CD4-positive, alpha-beta T cell (primary cell): ENCODE measurements at regions of chr7 and their contacts with region 1.

Region 1: DNA sequence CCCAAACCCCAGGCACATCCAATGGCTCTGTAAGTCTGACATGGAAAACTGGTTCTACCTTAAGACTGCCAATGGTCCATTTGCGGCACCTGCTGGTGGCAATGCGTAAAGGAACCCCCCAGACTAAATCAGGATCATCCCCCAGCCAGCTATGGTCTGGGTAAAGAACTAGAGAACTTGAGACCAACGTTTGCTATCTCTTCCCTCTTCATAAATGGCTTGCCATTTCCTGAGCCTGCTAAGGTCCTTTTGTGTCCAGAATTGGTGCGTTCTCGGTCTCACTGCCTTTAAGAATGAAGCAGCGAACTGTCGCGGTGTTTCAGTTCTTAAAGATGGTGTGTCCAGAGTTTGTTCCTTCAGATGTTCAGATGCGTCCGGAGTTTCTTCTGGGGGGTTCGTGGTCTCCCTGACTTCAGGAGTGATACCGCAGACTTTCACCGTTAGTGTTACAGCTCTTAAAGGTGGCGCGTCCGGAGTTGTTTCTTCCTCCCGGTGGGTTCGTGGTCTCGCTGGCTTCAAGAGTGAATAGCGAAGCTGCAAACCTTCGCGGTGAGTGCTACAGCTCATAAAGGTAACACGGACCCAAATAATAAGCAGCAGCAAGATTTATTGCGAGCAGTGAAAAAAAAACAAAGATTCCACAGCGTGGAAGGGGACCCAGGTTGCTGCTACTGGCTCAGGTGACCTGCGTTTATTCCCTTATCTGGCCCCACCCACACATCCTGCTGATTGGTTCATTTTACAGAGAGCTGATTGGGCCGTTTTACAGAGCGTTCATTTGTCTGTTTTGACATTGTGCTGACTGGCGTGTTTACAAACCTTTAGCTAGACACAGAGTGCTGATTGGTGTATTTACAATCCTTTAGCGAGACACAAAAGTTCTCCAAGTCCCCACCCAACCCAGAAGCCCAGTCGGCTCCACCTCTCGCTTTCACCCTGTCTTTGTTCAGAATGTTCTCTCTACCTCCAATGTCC is 95.4 kb downstream of the ELMO1 start:
- DNase-seq: peak; percentile 50 to 91 (median 66)
- ATAC-seq: peak; percentile 83
- H3K4me3 ChIP-seq: peak overlapping the region; percentile 81
- H3K4me3 Mint-ChIP-seq: peak overlapping the region; percentile 93
- H3K27ac ChIP-seq: peak overlapping the region; percentile 63 to 69
- H3K27ac Mint-ChIP-seq: peak overlapping the region; percentile 90
- H3K4me1 ChIP-seq: peaks cover 59% of the 10 kb centered on the region
- H3K4me1 Mint-ChIP-seq: peaks cover 90% of the 10 kb centered on the region
- H3K27me3 ChIP-seq: no peaks in the 10 kb centered on the region
- H3K27me3 Mint-ChIP-seq: no peaks in the 10 kb centered on the region
- CTCF ChIP-seq: peak; percentile 97

Region 2: GRCh38 chr7:37141742-37142141 is 211.5 kb before region 1 on chr7:
- CTCF ChIA-PET with region 1: no interaction called
- POLR2A ChIA-PET with region 1: no interaction called
- intact Hi-C with region 1: no loop called
- DNase-seq: no peak
- ATAC-seq: no peak
- H3K4me3 ChIP-seq: no peak overlapping the region
- H3K4me3 Mint-ChIP-seq: no peak overlapping the region
- H3K27ac ChIP-seq: no peak overlapping the region
- H3K27ac Mint-ChIP-seq: no peak overlapping the region
- H3K4me1 ChIP-seq: no peaks in the 10 kb centered on the region
- H3K4me1 Mint-ChIP-seq: peaks cover 11% of the 10 kb centered on the region
- H3K27me3 ChIP-seq: no peaks in the 10 kb centered on the region
- H3K27me3 Mint-ChIP-seq: no peaks in the 10 kb centered on the region
- CTCF ChIP-seq: no peak

Region 3: DNA sequence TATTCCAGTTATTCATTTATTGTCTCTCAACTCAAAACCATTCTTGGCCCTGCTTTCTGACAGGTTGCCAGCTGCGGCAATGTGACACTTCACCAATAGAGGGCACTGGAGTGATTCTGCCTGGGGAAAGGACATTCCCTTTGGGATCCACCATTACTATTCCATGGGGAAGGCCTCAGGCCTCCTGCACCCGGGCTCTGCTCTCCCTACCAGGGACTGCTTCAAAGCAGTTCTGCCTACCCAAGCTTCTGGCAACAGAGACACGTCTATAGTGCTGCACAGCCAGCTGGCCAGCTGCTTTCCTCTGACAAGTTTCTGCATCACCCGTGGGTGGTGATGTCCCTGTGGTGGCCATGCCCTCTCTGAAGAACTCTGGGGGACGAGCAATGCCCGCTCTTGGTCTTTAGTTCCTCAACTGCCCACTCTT is 68.4 kb before region 1 on chr7:
- CTCF ChIA-PET with region 1: interaction called, 24 read pairs
- POLR2A ChIA-PET with region 1: interaction called, 5 read pairs
- intact Hi-C with region 1: loop called (anchors 2 kb)
- DNase-seq: peak in 13 of 14 experiments; percentile 6 to 62 (median 31)
- ATAC-seq: peak; percentile 53
- H3K4me3 ChIP-seq: no peak overlapping the region
- H3K4me3 Mint-ChIP-seq: no peak overlapping the region
- H3K27ac ChIP-seq: no peak overlapping the region
- H3K27ac Mint-ChIP-seq: peak overlapping the region; percentile 75
- H3K4me1 ChIP-seq: peaks cover 19% of the 10 kb centered on the region
- H3K4me1 Mint-ChIP-seq: peaks cover 66% of the 10 kb centered on the region
- H3K27me3 ChIP-seq: no peaks in the 10 kb centered on the region
- H3K27me3 Mint-ChIP-seq: no peaks in the 10 kb centered on the region
- CTCF ChIP-seq: peak; percentile 88

Region 4: DNA sequence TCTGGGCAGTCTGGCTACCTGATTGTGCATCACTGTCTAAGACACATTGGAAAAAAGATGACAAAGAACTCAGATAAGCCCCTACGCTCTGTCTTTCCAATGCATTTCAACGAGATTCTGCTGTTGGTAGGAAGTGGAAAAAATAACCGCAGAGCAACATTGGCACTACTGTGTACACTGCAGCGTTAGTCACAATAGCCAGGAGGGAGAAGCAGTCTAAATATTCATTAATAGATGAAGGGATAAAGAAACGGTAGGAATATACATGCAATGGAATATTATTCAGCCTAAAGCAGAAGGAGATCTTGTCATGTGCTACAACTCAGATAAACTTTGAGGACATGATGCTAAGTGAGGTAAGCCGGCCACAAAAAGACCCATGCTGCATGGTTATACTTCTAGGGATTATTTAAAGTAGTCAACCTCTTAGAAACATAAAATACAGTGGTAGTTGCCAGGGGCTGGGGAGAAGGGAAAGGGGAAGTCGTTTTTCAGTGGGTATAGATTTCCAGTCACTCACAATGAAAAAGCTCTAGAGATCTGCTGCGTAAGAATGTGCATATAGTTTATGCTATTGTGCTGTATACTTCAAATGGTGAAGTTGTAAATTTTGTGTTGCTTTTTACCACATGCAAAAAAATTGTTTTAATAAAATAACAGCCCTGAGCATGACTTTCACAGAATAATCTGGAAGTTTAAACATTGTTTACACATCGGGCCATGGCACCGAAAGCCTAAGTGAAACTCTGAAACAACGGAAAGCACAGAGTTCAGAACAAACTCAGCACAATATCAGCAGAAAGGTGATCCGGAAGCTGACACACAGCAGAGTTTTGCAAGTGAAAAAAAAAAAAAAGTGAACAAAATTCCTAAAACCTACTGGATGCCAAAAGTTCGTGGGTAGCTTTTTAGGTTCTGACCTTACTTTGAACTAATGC is 55.3 kb after region 1 on chr7:
- CTCF ChIA-PET with region 1: no interaction called
- POLR2A ChIA-PET with region 1: interaction called, 16 read pairs
- intact Hi-C with region 1: loop called in 1 of 2 experiments (anchors 2 kb)
- DNase-seq: peak in 4 of 14 experiments; percentile 33 to 64 (median 50)
- ATAC-seq: peak; percentile 75
- H3K4me3 ChIP-seq: peak overlapping the region; percentile 49
- H3K4me3 Mint-ChIP-seq: peak overlapping the region; percentile 91
- H3K27ac ChIP-seq: peak overlapping the region in 1 of 2 donors; percentile 26
- H3K27ac Mint-ChIP-seq: peak overlapping the region; percentile 81
- H3K4me1 ChIP-seq: peaks cover 21% of the 10 kb centered on the region
- H3K4me1 Mint-ChIP-seq: peaks cover 75% of the 10 kb centered on the region
- H3K27me3 ChIP-seq: no peaks in the 10 kb centered on the region
- H3K27me3 Mint-ChIP-seq: no peaks in the 10 kb centered on the region
- CTCF ChIP-seq: no peak

Region 5: GRCh38 chr7:37495574-37496184 is 142.4 kb after region 1 on chr7:
- CTCF ChIA-PET with region 1: interaction called, 4 read pairs
- POLR2A ChIA-PET with region 1: interaction called, 7 read pairs
- intact Hi-C with region 1: loop called in 1 of 2 experiments (anchors 5 kb)
- DNase-seq: peak in 3 of 14 experiments; percentile 47 to 59 (median 51)
- ATAC-seq: peak; percentile 68
- H3K4me3 ChIP-seq: no peak overlapping the region
- H3K4me3 Mint-ChIP-seq: no peak overlapping the region
- H3K27ac ChIP-seq: no peak overlapping the region
- H3K27ac Mint-ChIP-seq: no peak overlapping the region
- H3K4me1 ChIP-seq: no peaks in the 10 kb centered on the region
- H3K4me1 Mint-ChIP-seq: no peaks in the 10 kb centered on the region
- H3K27me3 ChIP-seq: no peaks in the 10 kb centered on the region
- H3K27me3 Mint-ChIP-seq: no peaks in the 10 kb centered on the region
- CTCF ChIP-seq: peak; percentile 89

Region 6: DNA sequence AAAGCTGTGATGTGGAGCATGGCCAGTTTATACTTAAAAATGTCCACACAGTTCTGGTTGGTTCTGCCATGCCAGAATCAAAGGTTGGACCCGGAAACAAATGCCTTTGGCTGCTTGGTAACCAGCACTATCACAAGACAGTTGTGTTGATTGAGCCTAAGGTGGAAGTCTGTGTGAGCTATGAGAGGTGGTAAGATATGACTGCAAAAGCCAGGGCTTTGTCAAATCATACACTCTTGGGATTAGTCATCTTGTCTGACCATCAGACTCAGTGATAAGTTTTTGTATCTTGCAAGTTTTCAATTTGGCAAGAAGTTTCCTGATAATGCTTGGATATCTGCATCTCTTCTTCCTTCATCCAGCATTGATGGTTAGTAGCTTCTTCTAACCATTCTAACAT is 365.8 kb after region 1 on chr7:
- CTCF ChIA-PET with region 1: no interaction called
- POLR2A ChIA-PET with region 1: no interaction called
- intact Hi-C with region 1: no loop called
- DNase-seq: no peak
- ATAC-seq: no peak
- H3K4me3 ChIP-seq: no peak overlapping the region
- H3K4me3 Mint-ChIP-seq: no peak overlapping the region
- H3K27ac ChIP-seq: no peak overlapping the region
- H3K27ac Mint-ChIP-seq: no peak overlapping the region
- H3K4me1 ChIP-seq: no peaks in the 10 kb centered on the region
- H3K4me1 Mint-ChIP-seq: no peaks in the 10 kb centered on the region
- H3K27me3 ChIP-seq: no peaks in the 10 kb centered on the region
- H3K27me3 Mint-ChIP-seq: no peaks in the 10 kb centered on the region
- CTCF ChIP-seq: no peak